GM12878 (cell line): ENCODE measurements at regions of chr14 and their contacts with region 1.

Region 1: DNA sequence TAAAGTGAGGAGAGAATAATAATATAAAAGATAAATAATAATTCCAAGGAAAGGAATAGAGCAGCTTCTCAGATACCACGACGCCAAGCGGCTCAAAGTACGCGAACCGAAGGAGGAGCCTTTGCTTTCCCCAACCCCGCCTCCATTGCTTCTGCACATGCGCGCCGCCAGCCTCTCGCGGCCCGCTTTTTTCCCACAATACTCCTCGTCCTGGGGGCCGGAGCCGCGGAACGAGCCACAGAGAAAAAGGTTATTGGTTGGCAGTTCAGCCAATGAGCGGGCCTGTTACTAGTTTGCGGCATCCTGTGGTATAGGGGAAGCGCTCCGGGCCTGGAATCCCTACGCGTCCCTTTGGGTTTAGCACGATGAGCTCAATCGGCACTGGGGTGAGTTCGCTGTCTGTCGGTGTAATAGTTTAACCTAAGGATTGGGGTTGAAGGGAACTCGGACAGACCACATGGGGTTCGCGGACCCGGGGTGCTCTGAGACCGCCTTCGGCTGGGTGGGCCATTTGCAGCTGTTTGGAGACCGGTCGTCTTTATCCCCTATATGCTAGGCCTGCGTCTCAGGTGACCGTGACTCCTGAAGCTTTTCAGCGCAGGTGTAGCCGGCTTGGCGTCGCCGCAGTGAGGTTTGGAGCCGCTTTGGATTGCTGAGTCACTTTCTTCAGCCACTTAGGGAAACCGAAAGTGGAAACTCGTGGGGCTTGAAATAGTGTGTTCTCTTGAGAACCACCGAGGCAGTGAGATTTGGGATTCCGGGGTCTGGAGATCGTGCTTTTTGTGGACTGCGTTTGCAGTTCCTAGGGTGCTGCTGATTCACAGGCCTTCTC is at the start of gene PSMA3:
- DNase-seq: peak; percentile 88
- ATAC-seq: peak; percentile 93
- H3K4me3 ChIP-seq: peak within 1 kb of the TSS; percentile 94
- H3K27ac ChIP-seq: peak within 1 kb of the TSS; percentile 99
- H3K4me1 ChIP-seq: no peaks in the 10 kb centered on the region; the same call in 1 of the 2 replicates
- H3K27me3 ChIP-seq: no peaks in the 10 kb centered on the region
- CTCF ChIP-seq: no peak
- EP300 ChIP-seq: peak in 1 of 2 experiments; percentile 27; a peak in 1 of 4 replicates
- POLR2A ChIP-seq: peak; percentile 93
- RAD21 ChIP-seq: no peak
- polyA plus RNA-seq, gene PSMA3: 813 to 936 TPM

Region 2: GRCh38 chr14:58258156-58258555 is 13.4 kb after region 1 on chr14:
- CTCF ChIA-PET with region 1: interaction called, 4 read pairs
- POLR2A ChIA-PET with region 1: interaction called, 5 read pairs
- RAD21 ChIA-PET with region 1: no interaction called
- SMC1A ChIA-PET with region 1: interaction called, 12 read pairs
- in situ Hi-C with region 1: no loop called
- intact Hi-C with region 1: no loop called
- DNase-seq: no peak
- ATAC-seq: peak; percentile 31; the same call in 1 of the 3 replicates
- H3K4me3 ChIP-seq: no peak overlapping the region
- H3K27ac ChIP-seq: no peak overlapping the region
- H3K4me1 ChIP-seq: no peaks in the 10 kb centered on the region
- H3K27me3 ChIP-seq: no peaks in the 10 kb centered on the region
- CTCF ChIP-seq: no peak
- EP300 ChIP-seq: no peak
- POLR2A ChIP-seq: no peak
- RAD21 ChIP-seq: no peak

Region 3: GRCh38 chr14:58275527-58276190 is 30.9 kb after region 1 on chr14:
- CTCF ChIA-PET with region 1: interaction called, 3 read pairs
- POLR2A ChIA-PET with region 1: interaction called, 3 read pairs
- RAD21 ChIA-PET with region 1: no interaction called
- SMC1A ChIA-PET with region 1: interaction called, 10 read pairs
- in situ Hi-C with region 1: no loop called
- intact Hi-C with region 1: no loop called
- DNase-seq: no peak
- ATAC-seq: no peak
- H3K4me3 ChIP-seq: no peak overlapping the region
- H3K27ac ChIP-seq: no peak overlapping the region
- H3K4me1 ChIP-seq: no peaks in the 10 kb centered on the region
- H3K27me3 ChIP-seq: no peaks in the 10 kb centered on the region
- CTCF ChIP-seq: no peak
- EP300 ChIP-seq: no peak
- POLR2A ChIP-seq: no peak
- RAD21 ChIP-seq: no peak